Activated CD4-positive, alpha-beta T cell treated with anti-CD3 and anti-CD28 coated beads for 36 hours (primary cell): ENCODE measurements at regions of chr22 and their contacts with region 1.

Region 1: DNA sequence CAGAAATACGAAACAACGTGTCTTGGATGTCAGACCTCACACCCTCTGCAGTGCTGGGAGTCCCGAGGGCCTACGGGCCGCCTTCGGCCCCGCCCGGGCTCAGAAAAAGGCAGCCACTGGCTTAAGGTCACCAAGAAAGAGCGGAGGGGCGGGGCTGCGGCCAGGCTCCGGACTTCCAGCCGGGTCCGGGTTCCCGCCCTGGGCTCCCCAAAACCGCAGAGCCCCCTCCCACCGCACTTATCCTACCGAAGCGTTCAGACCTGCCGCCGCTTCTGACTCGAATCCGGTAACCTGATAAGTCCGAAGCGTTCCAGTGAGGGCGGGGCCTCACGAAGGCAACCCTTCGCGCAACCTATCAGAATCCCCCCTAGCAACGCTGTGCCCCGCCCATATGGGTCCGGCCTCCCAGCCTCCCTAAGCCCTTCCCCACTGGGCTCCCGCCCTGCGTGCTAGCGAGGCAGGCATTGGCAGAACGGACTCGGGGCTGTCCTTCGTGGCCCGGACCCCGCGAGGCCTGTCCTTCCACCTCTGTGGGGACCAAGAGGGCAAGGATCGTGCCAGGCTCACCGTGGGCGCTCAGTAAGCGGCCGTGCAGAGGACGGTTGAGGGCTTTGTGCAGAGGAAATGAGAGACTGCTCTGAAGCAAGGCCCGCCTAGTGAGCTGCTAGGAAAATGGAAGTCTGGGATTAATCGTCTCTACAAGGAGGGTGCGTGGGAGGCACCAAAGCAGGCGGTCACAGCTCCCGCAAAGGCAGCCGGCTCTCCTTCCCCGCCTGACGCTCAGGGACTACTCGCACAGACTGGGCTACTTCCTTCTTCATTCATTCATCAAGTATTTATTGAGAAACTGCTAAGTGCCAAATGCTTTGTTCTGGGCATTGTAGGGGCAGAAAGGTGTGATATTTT is at the start of gene NAGA:
- DNase-seq: peak; percentile 97
- ATAC-seq: peak; percentile 99
- H3K4me3 Mint-ChIP-seq: peak within 1 kb of the TSS; percentile 84
- H3K27ac Mint-ChIP-seq: peak within 1 kb of the TSS; percentile 89
- H3K4me1 Mint-ChIP-seq: peaks cover 28% of the 10 kb centered on the region
- H3K27me3 Mint-ChIP-seq: no peaks in the 10 kb centered on the region
- total RNA-seq, gene NAGA: 19.7 to 20.0 TPM

Region 2: GRCh38 chr22:41780746-41781505 is 289.8 kb before region 1 on chr22:
- CTCF ChIA-PET with region 1: no interaction called
- POLR2A ChIA-PET with region 1: no interaction called
- intact Hi-C with region 1: loop called in 1 of 2 experiments (anchors 5 kb)
- DNase-seq: peak; percentile 95
- ATAC-seq: peak; percentile 94
- H3K4me3 Mint-ChIP-seq: peak overlapping the region; percentile 81
- H3K27ac Mint-ChIP-seq: peak overlapping the region; percentile 98
- H3K4me1 Mint-ChIP-seq: peaks cover 39% of the 10 kb centered on the region
- H3K27me3 Mint-ChIP-seq: no peaks in the 10 kb centered on the region

Region 3: GRCh38 chr22:41946629-41947423 is 123.9 kb before region 1 on chr22 and contains the start of gene CENPM:
- CTCF ChIA-PET with region 1: no interaction called
- POLR2A ChIA-PET with region 1: no interaction called
- intact Hi-C with region 1: loop called in 1 of 2 experiments (anchors 2 kb)
- DNase-seq: peak; percentile 98
- ATAC-seq: peak; percentile 95
- H3K4me3 Mint-ChIP-seq: peak within 1 kb of the TSS; percentile 97
- H3K27ac Mint-ChIP-seq: peak within 1 kb of the TSS; percentile 92
- H3K4me1 Mint-ChIP-seq: peaks cover 59% of the 10 kb centered on the region
- H3K27me3 Mint-ChIP-seq: no peaks in the 10 kb centered on the region
- total RNA-seq, gene CENPM: 65.2 to 82.1 TPM

Region 4: GRCh38 chr22:41998361-41999275 is 72.2 kb before region 1 on chr22 and contains the start of gene WBP2NL:
- CTCF ChIA-PET with region 1: interaction called, 3 read pairs
- POLR2A ChIA-PET with region 1: no interaction called
- intact Hi-C with region 1: loop called (anchors 1 to 10 kb)
- DNase-seq: peak; percentile 92
- ATAC-seq: peak; percentile 97
- H3K4me3 Mint-ChIP-seq: peak within 1 kb of the TSS; percentile 77
- H3K27ac Mint-ChIP-seq: peak within 1 kb of the TSS; percentile 97
- H3K4me1 Mint-ChIP-seq: peaks cover 20% of the 10 kb centered on the region
- H3K27me3 Mint-ChIP-seq: no peaks in the 10 kb centered on the region
- total RNA-seq, gene WBP2NL: 0.30 to 0.54 TPM

Region 5: GRCh38 chr22:42127606-42128005 is 56.8 kb after region 1 on chr22:
- CTCF ChIA-PET with region 1: no interaction called
- POLR2A ChIA-PET with region 1: no interaction called
- intact Hi-C with region 1: no loop called
- DNase-seq: no peak
- ATAC-seq: no peak
- H3K4me3 Mint-ChIP-seq: no peak overlapping the region
- H3K27ac Mint-ChIP-seq: no peak overlapping the region
- H3K4me1 Mint-ChIP-seq: no peaks in the 10 kb centered on the region
- H3K27me3 Mint-ChIP-seq: no peaks in the 10 kb centered on the region

Region 6: GRCh38 chr22:42270512-42271417 is 200.0 kb after region 1 on chr22 and contains the start of gene TCF20:
- CTCF ChIA-PET with region 1: no interaction called
- POLR2A ChIA-PET with region 1: no interaction called
- intact Hi-C with region 1: loop called in 1 of 2 experiments (anchors 2 kb)
- DNase-seq: peak; percentile 88
- ATAC-seq: peak; percentile 85
- H3K4me3 Mint-ChIP-seq: peak within 1 kb of the TSS; percentile 96
- H3K27ac Mint-ChIP-seq: peak within 1 kb of the TSS; percentile 82
- H3K4me1 Mint-ChIP-seq: peaks cover 30% of the 10 kb centered on the region
- H3K27me3 Mint-ChIP-seq: no peaks in the 10 kb centered on the region
- total RNA-seq, gene TCF20: 64.1 to 68.3 TPM

Region 7: DNA sequence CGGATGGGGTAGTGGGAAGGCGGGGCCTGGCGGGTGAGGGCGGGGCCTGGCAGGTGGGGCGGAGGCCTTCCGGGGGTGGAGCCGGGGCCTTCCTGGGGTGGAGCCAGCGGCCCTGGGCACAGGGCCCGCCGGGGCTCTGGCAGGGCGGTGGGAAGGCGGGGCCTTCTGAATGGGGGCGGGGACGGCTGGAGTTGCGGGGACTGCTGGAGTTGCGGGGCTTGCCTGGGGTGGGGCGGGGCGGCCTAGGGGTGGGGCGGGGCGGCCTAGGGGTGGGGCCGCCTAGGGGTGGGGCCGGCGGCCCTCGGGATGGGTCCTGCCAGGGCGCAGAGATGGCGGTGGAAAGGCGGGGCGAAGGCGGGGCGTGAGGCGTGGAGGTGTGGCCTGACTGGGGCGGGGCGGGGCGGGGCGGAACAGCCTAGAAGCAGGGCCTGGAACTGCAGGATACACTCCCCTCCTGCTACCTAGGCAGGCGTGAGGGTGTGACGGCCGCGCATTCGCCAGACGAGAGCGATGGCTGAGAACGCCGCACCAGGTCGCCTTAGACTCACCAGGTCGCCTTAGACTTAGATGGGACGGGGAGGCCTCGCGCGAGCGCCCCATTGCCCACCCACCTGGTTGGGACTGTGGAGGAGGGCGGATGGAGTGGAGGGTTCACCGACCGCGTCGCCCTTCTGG is 429.5 kb after region 1 on chr22:
- CTCF ChIA-PET with region 1: no interaction called
- POLR2A ChIA-PET with region 1: no interaction called
- intact Hi-C with region 1: loop called in 1 of 2 experiments (anchors 2 kb)
- DNase-seq: peak; percentile 91
- ATAC-seq: peak; percentile 98
- H3K4me3 Mint-ChIP-seq: peak overlapping the region; percentile 38
- H3K27ac Mint-ChIP-seq: no peak overlapping the region
- H3K4me1 Mint-ChIP-seq: peaks cover 11% of the 10 kb centered on the region
- H3K27me3 Mint-ChIP-seq: no peaks in the 10 kb centered on the region